Activated B cell treated with CpG ODN at 0.5 μM for 24 hours (primary cell): ENCODE measurements at regions of chrX and their contacts with region 1.

Region 1: DNA sequence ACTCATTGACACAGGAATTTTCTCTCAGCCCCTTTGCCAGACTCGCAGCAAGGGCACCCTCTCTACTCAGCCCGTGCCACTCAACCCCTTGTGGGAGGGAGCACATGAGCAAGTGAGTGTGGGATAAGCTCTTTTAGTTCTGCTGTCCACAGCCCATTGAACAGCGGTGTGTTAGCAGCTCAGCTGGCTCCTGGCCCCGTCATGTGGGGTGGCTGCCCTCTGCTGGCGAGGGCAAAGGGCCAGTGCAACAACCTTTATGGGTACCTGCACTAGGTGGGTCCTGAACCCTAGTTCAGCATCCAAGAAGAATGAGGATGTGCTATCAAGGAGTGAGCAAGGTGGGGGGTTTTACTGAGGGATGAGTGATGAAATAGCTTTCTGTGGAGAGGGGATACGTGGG is 85.0 kb upstream of the ZNF81 start:
- DNase-seq: no peak
- ATAC-seq: no peak
- H3K4me3 Mint-ChIP-seq: no peak overlapping the region
- H3K27ac Mint-ChIP-seq: no peak overlapping the region
- H3K4me1 Mint-ChIP-seq: no peaks in the 10 kb centered on the region
- H3K27me3 Mint-ChIP-seq: peaks cover 14% of the 10 kb centered on the region
- CTCF ChIP-seq: no peak

Region 2: GRCh38 chrX:46777971-46778810 is 973.5 kb before region 1 on chrX:
- CTCF ChIA-PET with region 1: no interaction called
- POLR2A ChIA-PET with region 1: no interaction called
- intact Hi-C with region 1: no loop called
- DNase-seq: no peak
- ATAC-seq: no peak
- H3K4me3 Mint-ChIP-seq: no peak overlapping the region
- H3K27ac Mint-ChIP-seq: no peak overlapping the region
- H3K4me1 Mint-ChIP-seq: no peaks in the 10 kb centered on the region
- H3K27me3 Mint-ChIP-seq: no peaks in the 10 kb centered on the region
- CTCF ChIP-seq: no peak

Region 3: GRCh38 chrX:47540754-47541538 is 210.7 kb before region 1 on chrX:
- CTCF ChIA-PET with region 1: no interaction called
- POLR2A ChIA-PET with region 1: no interaction called
- intact Hi-C with region 1: loop called (anchors 2 kb)
- DNase-seq: no peak
- ATAC-seq: no peak
- H3K4me3 Mint-ChIP-seq: no peak overlapping the region
- H3K27ac Mint-ChIP-seq: no peak overlapping the region
- H3K4me1 Mint-ChIP-seq: no peaks in the 10 kb centered on the region
- H3K27me3 Mint-ChIP-seq: peaks cover 2% of the 10 kb centered on the region
- CTCF ChIP-seq: no peak